ENCODE measurements at regions of chrX and their contacts with region 1.

Region 1: DNA sequence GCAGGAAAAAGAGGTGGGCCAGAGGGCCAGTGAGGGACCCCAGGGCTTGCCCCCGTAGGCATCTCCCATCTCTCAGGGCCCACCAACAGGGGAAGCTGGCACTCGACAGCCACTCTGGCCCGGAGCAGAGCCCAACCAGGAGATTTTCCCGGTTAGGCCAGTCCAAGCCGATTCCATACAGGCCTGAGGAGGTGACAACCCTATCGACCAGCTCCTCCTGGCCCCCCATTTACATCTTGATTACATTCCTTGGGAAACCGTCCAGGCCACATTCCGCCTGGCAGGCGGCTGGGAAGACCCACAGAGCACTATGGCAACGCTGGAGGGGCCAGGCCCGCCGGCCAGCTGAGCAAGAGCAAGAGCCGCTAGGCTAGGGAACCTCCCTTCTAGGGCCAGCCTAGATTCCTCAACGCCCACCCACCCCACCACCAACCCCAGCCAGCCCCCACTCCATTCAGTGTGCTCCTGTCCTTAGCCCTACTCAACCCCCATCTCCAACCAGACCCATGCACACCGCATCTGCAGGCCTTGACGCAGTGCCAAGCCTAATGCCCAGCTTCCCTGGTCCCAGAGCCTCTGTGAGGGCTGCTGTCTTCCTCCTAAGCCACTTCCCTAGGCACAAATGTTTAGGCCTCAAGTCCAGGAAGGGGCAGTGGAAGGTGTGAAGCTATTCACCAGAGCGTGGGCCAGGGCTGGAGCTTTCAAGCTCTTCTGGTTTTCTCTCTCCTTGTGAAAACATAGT is 161.2 kb downstream of the EFNB1 start:
- DNase-seq: peak; percentile 68 to 82
- ATAC-seq: peak; percentile 58
- H3K4me3 ChIP-seq: no peak overlapping the region
- H3K27ac ChIP-seq: peak overlapping the region in 1 of 2 donors; percentile 32
- H3K4me1 ChIP-seq: no peaks in the 10 kb centered on the region
- H3K27me3 ChIP-seq: no peaks in the 10 kb centered on the region

Region 2: GRCh38 chrX:68719904-68720614 is 270.0 kb before region 1 on chrX:
- intact Hi-C with region 1: no loop called
- DNase-seq: no peak
- ATAC-seq: no peak
- H3K4me3 ChIP-seq: no peak overlapping the region
- H3K27ac ChIP-seq: no peak overlapping the region
- H3K4me1 ChIP-seq: no peaks in the 10 kb centered on the region
- H3K27me3 ChIP-seq: no peaks in the 10 kb centered on the region

Region 3: DNA sequence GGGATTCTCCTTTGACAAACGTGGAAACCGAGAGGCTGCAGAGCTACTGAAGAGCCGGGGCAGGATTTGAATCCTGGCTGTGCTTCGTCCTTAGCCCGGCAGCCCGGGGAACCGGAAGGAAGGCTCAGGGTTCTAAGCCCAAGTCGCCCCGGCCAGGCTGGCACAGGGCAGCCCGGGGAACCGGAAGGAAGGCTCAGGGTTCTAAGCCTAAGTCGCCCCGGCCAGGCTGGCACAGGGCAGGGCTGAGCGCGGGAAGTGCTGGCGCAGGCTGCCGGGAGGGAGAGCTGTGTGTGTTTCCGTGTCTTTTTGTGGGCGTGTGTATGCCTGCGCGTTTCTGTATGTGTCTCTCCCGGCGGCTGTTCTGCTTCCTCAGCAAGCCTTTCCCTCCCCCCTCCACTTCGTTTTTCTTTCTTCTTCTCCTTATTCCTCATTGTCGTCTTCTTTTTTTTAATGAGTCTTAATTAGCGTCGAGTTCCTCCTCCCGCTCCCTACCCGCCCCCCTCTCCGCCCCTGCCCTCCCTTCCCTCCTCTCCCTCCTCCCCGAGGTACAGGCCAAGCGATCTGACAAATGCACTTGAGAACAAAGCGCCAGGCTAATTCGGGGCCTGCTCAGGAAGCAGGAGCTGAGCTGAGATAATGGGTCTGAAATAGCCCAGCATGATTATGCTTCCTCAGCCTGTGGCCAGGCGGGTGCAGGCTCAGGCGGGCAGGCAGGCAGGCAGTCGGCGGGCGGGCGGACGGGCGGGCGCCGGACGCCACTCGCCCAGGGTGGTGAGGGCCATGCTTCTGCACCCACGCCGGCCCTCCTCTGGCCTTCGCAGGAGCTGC is 95.3 kb before region 1 on chrX:
- intact Hi-C with region 1: loop called in 1 of 2 experiments (anchors 10 kb)
- DNase-seq: peak; percentile 83 to 88
- ATAC-seq: peak; percentile 72
- H3K4me3 ChIP-seq: no peak overlapping the region
- H3K27ac ChIP-seq: peak overlapping the region in 1 of 2 donors; percentile 97
- H3K4me1 ChIP-seq: no peaks in the 10 kb centered on the region
- H3K27me3 ChIP-seq: no peaks in the 10 kb centered on the region

Region 4: DNA sequence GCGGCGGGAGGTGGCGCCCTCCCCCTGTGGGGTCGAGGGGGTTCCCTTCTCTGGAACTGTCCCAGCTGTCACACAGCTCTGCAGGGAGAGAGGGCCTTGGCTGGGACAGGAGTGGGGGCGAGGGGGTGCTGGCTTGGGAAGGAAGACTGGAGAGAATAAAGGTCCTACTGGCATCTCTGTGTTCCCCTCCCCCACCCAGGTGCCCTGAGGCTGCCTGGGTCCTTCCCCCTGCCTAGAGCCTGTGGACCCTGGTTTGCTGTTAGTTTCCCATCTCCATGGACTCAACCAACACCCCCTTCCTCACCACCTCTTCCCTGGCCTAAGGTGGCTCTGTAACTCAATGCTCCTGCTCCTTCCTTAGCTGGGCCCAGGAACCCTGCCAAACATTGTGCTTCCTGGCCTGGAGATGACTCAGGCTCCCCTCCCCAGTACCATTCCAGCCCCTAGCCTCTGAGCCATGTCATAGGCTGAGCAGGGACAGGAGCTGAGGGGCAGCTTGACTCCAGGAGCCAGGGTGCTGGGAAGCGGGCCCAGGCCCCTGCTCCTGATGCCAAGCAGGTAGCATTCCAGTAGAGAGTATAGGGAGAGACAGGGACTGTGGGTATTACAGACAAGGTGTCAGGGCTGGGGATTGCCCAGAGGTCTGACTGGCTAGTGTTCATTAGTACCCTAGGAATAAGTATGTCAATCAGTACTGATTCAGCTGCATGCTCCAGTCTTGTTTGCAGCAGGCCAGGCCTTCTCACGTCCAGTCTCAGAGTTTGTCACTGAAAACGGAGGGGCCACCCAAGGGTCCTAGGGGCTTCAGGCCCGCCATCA is 60.5 kb before region 1 on chrX:
- intact Hi-C with region 1: loop called in 1 of 2 experiments (anchors 10 kb)
- DNase-seq: peak in 1 of 2 donors; percentile 62
- ATAC-seq: no peak
- H3K4me3 ChIP-seq: no peak overlapping the region
- H3K27ac ChIP-seq: no peak overlapping the region
- H3K4me1 ChIP-seq: no peaks in the 10 kb centered on the region
- H3K27me3 ChIP-seq: no peaks in the 10 kb centered on the region

Region 5: DNA sequence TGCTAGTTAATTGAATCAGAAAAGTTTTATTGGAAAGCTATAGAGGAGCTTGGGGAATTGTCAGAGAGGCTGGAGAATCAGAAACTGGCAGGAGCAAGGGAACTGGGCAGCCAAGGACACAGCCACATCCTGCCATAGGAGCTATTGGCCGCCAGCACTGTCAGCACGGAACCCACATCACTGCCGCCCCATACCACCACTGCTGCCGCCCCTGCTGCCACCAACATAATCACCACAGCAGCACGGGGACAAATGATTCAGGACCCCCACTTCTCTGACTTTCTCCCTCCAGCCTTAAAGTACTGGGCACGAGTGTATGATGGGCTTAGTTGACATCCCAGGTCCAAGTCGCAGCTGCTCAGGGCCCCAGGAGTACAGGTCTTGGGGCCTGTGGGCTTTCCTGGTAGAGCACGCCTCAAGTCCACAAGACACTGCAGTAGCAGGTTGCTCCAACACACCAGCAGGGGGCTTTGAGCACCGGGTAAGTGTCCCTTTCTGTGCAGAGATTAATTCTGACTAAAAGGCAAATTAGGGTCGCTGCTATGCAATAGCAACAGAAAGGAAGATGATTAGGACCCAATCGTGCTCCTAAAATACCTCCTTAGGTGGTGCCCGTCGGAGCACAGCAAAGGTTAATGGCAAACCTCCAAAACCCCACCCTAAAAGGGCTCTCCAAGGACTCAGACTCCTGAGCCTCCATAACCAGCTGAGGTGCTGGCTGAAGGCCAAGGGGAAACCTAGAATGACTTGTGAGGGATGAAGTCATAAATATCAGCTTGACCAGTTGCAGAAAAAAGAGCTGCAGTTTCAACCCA is 168.3 kb after region 1 on chrX:
- intact Hi-C with region 1: no loop called
- DNase-seq: peak in 1 of 2 donors; percentile 83
- ATAC-seq: peak; percentile 23
- H3K4me3 ChIP-seq: no peak overlapping the region
- H3K27ac ChIP-seq: peak overlapping the region in 1 of 2 donors; percentile 36
- H3K4me1 ChIP-seq: no peaks in the 10 kb centered on the region
- H3K27me3 ChIP-seq: no peaks in the 10 kb centered on the region